Calu3 (cell line): ENCODE measurements at regions of chr6 and their contacts with region 1.

Region 1: DNA sequence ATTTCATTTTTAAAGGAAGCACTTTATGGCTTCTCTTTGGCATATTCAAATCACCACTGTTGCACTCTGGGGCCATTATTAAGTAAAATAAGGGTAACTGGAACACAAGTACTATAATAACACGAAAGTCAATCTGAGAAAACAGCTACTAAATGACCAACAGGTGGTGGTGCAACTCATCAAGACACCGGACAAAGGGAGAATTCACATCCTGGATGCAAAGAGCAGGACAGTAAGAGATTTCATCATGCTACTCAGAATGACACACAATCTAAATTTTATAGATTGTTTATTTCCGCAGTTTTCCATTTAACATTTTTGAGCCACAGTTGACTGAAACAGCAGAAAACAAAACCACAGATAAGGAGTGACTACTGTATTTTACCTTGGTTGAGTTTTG is 27.6 kb upstream of the LY86 start:
- DNase-seq: no peak
- H3K4me3 Mint-ChIP-seq: no peak overlapping the region
- H3K27ac Mint-ChIP-seq: no peak overlapping the region
- H3K4me1 Mint-ChIP-seq: no peaks in the 10 kb centered on the region
- H3K27me3 Mint-ChIP-seq: peaks cover 54% of the 10 kb centered on the region
- CTCF ChIP-seq: no peak

Region 2: GRCh38 chr6:4809999-4810918 is 1750.7 kb before region 1 on chr6:
- CTCF ChIA-PET with region 1: no interaction called
- intact Hi-C with region 1: no loop called
- DNase-seq: no peak
- H3K4me3 Mint-ChIP-seq: no peak overlapping the region
- H3K27ac Mint-ChIP-seq: no peak overlapping the region
- H3K4me1 Mint-ChIP-seq: peaks cover 22% of the 10 kb centered on the region
- H3K27me3 Mint-ChIP-seq: no peaks in the 10 kb centered on the region
- CTCF ChIP-seq: no peak

Region 3: DNA sequence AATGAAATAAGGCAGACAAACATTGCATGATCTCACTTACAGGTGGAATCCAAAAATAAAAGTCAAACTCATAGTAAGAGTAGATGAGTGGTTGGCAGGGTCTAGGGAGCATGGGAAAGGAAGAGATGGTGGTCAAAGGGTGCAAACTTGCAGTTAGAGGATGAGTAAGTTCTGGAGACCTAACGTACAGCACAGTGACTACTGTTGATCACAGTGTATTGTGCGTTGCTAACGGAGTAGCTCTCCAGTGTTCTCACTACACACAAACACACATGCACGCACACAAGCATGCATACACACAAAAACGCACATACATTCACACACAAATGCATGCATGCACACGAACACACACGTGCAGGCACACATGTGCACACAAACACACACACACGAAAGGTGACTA is 82.5 kb after region 1 on chr6:
- CTCF ChIA-PET with region 1: no interaction called
- intact Hi-C with region 1: loop called (anchors 10 kb)
- DNase-seq: no peak
- H3K4me3 Mint-ChIP-seq: no peak overlapping the region
- H3K27ac Mint-ChIP-seq: no peak overlapping the region
- H3K4me1 Mint-ChIP-seq: no peaks in the 10 kb centered on the region
- H3K27me3 Mint-ChIP-seq: peaks cover 10% of the 10 kb centered on the region
- CTCF ChIP-seq: no peak